PC-9 (cell line): ENCODE measurements at regions of chr12 and their contacts with region 1.

Region 1: DNA sequence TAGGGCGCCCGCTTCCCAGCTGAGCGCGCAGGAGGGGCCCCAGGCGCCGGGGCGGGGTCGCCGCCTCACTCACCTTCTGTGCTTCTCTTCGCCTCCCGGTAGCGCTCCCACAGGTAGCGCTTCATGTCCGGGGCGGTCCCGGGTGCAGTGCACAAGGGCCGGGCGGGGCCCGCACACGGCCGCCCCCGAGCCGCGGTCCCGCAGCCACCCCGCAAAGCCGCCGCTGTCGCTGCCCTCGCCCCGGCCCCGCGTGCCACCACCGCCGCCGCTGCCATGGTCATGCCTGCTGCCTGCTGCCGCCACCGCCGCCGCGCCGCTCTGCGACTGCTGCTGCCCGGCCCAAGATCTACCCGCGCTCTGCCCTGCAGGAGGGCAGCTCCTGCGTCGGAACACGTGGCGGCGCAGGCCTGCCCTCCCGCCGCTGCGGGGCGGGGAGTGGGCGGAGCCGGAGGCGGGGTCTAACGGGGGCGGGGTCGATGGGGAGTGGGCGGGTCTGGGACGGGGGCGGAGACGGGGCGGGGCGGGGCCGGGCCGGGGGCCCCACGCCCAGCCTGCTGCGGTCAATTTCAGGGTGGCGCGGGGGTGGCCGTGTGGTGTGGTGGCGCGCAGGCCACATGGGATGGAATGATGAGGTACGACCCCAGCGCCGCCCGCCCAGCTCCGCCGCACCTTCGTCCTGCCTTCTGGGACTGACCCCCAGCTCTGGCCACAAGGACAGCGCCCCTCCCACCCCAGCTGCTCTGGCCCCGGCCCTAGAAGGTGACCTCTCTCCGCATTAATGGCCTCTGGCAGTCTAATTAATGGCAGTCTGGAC is at the start of gene NT5DC3:
- DNase-seq: peak; percentile 71 to 84
- H3K4me3 ChIP-seq: peak within 1 kb of the TSS; percentile 85
- H3K27ac ChIP-seq: peak within 1 kb of the TSS; percentile 92
- H3K4me1 ChIP-seq: peaks cover 31% of the 10 kb centered on the region
- H3K27me3 ChIP-seq: no peaks in the 10 kb centered on the region
- CTCF ChIP-seq: no peak
- total RNA-seq, gene NT5DC3: 11.5 and 13.2 TPM in 2 replicates

Region 2: GRCh38 chr12:103560604-103561573 is 280.2 kb before region 1 on chr12:
- CTCF ChIA-PET with region 1: no interaction called
- POLR2A ChIA-PET with region 1: no interaction called
- intact Hi-C with region 1: loop called (anchors 2 kb)
- DNase-seq: peak; percentile 67 to 91
- H3K4me3 ChIP-seq: no peak overlapping the region
- H3K27ac ChIP-seq: peak overlapping the region; percentile 43
- H3K4me1 ChIP-seq: peaks cover 14% of the 10 kb centered on the region
- H3K27me3 ChIP-seq: no peaks in the 10 kb centered on the region
- CTCF ChIP-seq: no peak

Region 3: GRCh38 chr12:103779428-103780092 is 61.5 kb before region 1 on chr12:
- CTCF ChIA-PET with region 1: no interaction called
- POLR2A ChIA-PET with region 1: no interaction called
- intact Hi-C with region 1: loop called (anchors 1 kb)
- DNase-seq: peak in 1 of 2 experiments; percentile 51
- H3K4me3 ChIP-seq: no peak overlapping the region
- H3K27ac ChIP-seq: peak overlapping the region; percentile 63
- H3K4me1 ChIP-seq: peaks cover 24% of the 10 kb centered on the region
- H3K27me3 ChIP-seq: no peaks in the 10 kb centered on the region
- CTCF ChIP-seq: no peak

Region 4: GRCh38 chr12:103805961-103806360 is 35.1 kb before region 1 on chr12:
- CTCF ChIA-PET with region 1: no interaction called
- POLR2A ChIA-PET with region 1: interaction called, 3 read pairs
- intact Hi-C with region 1: loop called (anchors 1 kb)
- DNase-seq: no peak
- H3K4me3 ChIP-seq: no peak overlapping the region
- H3K27ac ChIP-seq: peak overlapping the region; percentile 94
- H3K4me1 ChIP-seq: peaks cover 70% of the 10 kb centered on the region
- H3K27me3 ChIP-seq: no peaks in the 10 kb centered on the region
- CTCF ChIP-seq: no peak

Region 5: DNA sequence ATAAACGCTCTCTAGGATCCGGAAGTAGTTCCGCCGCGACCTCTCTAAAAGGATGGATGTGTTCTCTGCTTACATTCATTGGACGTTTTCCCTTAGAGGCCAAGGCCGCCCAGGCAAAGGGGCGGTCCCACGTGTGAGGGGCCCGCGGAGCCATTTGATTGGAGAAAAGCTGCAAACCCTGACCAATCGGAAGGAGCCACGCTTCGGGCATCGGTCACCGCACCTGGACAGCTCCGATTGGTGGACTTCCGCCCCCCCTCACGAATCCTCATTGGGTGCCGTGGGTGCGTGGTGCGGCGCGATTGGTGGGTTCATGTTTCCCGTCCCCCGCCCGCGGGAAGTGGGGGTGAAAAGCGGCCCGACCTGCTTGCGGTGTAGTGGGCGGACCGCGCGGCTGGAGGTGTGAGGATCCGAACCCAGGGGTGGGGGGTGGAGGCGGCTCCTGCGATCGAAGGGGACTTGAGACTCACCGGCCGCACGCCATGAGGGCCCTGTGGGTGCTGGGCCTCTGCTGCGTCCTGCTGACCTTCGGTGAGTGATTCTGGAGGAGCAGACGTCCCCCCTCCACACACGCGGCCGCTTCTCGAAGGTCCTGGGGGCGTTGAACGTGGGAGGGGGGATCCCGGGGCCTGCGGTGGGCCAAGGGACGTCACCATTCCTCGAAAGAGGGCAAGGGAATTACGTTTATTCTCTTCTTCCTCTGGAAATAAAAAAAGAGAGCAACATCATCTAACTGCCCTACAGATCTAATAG is 89.1 kb after region 1 on chr12 and contains the start of gene HSP90B1:
- CTCF ChIA-PET with region 1: no interaction called
- POLR2A ChIA-PET with region 1: interaction called, 4 read pairs
- intact Hi-C with region 1: loop called (anchors 1 kb)
- DNase-seq: peak; percentile 99
- H3K4me3 ChIP-seq: peak within 1 kb of the TSS; percentile 98
- H3K27ac ChIP-seq: peak within 1 kb of the TSS; percentile 88
- H3K4me1 ChIP-seq: peaks cover 30% of the 10 kb centered on the region
- H3K27me3 ChIP-seq: no peaks in the 10 kb centered on the region
- CTCF ChIP-seq: no peak
- total RNA-seq, gene HSP90B1: 398 and 534 TPM in 2 replicates